ENCODE measurements at regions of chr13 and their contacts with region 1.

Region 1: GRCh38 chr13:58704953-58705352 is 1073.4 kb downstream of the PCDH17 start:
- DNase-seq: no peak
- ATAC-seq: peak in 1 of 4 donors; percentile 16
- H3K4me3 ChIP-seq: no peak overlapping the region
- H3K27ac ChIP-seq: no peak overlapping the region
- H3K4me1 ChIP-seq: no peaks in the 10 kb centered on the region
- H3K27me3 ChIP-seq: no peaks in the 10 kb centered on the region
- CTCF ChIP-seq: no peak
- POLR2A ChIP-seq: no peak

Region 2: GRCh38 chr13:58655086-58655485 is 49.9 kb before region 1 on chr13:
- intact Hi-C with region 1: loop called in 1 of 2 experiments (anchors 5 kb)
- DNase-seq: no peak
- ATAC-seq: peak in 1 of 4 donors; percentile 27
- H3K4me3 ChIP-seq: no peak overlapping the region
- H3K27ac ChIP-seq: no peak overlapping the region
- H3K4me1 ChIP-seq: no peaks in the 10 kb centered on the region
- H3K27me3 ChIP-seq: no peaks in the 10 kb centered on the region
- CTCF ChIP-seq: no peak
- POLR2A ChIP-seq: no peak

Region 3: DNA sequence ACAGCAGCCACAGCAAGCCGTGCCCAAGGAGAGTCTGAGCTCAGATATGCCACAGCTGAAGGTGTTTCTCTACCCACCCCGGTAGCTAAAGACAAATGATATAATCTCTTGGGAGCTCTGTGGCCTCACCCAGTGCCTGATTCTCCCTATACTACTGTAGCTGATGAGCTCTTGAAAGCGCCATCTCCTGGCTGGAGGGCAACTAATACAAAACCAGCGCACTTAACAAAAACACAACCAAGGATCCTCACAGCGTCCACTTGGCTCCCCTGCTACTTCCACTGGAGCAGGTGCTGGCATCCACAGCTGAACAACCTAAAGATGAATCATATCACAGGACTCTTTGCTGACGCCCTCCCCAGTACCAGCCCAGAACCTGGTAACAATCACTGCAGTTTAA is 138.6 kb after region 1 on chr13:
- intact Hi-C with region 1: no loop called
- DNase-seq: no peak
- ATAC-seq: no peak
- H3K4me3 ChIP-seq: no peak overlapping the region
- H3K27ac ChIP-seq: no peak overlapping the region
- H3K4me1 ChIP-seq: no peaks in the 10 kb centered on the region
- H3K27me3 ChIP-seq: no peaks in the 10 kb centered on the region
- CTCF ChIP-seq: no peak
- POLR2A ChIP-seq: no peak

Measured in right lobe of liver (tissue), 6 donors.